ENCODE measurements at regions of chr5 and their contacts with region 1.

Region 1: DNA sequence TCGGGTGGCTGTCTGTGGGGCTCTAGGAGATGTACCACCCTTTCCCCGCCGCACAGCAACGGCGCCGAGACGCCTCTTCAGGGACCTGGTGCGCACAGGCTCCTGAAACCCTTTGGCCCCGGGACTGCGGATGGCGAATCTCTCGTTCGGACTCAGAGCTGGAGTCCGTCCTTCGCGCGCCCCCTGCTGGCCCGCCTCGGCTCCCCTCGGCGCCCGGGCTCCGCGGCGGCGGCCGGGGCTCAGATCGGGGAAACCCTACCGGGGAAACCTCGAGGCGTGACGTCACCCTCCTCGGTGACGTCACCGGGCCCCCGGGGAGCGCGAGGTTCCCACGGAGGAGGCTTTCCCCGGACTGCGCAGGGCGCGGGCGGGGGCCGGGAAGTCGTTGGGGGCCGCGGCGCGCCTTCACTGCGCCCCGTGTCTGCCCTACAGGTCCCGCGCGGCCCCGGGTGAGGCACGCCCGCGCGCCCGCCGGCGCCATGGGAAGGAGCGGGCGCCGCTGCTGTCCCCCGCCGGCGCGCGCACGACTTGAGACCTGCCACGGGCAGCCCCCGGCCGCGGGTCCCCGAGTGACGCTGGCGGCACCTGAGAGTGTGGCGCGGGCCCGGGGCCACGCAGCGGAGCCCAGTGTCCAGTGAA is 7.9 kb downstream of the PRR7 start:
- DNase-seq: peak; percentile 95
- H3K4me3 Mint-ChIP-seq: peak overlapping the region; percentile 78
- H3K27ac Mint-ChIP-seq: peak overlapping the region; percentile 66
- H3K4me1 Mint-ChIP-seq: peaks cover 11% of the 10 kb centered on the region
- H3K27me3 Mint-ChIP-seq: no peaks in the 10 kb centered on the region

Region 2: DNA sequence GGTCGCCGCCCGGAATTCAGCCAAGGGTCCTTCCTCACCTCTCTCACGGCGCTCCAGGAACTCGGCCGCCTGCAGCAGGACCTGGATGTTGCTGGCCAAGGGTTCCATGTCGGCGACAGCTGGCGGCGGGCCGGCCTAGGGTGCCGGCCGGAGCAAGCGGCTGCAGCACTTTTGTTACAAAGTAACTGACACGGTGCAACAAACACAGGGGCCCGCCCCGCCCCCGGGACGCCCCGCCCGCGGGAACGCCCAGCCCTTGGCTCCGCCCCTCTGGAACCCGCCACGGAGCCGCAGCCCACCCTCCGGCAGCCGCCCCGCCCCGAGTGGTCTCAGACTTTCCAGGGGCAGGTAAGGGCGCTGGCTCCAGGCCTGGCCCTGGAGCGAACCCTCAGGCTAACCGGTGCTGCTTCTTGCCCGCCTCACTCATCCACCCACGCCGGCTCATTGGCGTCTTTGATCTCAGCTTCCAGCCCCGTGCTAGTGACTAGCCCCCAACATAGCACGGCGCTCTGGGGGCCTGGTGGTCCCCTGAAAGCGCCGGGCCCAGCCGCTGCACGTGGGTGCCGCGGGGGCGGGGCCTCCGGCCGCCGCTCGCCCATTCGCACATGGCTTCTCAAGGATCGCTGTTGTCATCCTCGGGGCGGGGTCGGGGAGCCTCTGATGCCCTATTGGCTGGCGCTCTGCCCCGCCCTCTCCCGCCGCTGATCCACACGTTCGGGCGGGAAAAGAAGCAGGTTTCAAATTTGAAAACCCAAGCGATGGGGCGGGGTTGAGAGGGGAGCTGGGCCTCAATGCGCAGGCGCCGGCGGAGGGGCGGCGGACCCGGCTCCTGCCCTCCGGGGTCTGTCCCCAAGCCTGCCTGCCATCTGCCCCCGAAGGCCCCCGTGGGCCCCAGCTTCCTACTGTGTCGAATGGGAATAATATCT is 142.5 kb before region 1 on chr5 and contains the start of gene MXD3:
- CTCF ChIA-PET with region 1: interaction called, 26 read pairs
- POLR2A ChIA-PET with region 1: interaction called, 3 read pairs
- intact Hi-C with region 1: loop called (anchors 1 kb)
- DNase-seq: peak; percentile 98
- H3K4me3 Mint-ChIP-seq: peak within 1 kb of the TSS; percentile 78
- H3K27ac Mint-ChIP-seq: peak within 1 kb of the TSS; percentile 88
- H3K4me1 Mint-ChIP-seq: peaks cover 22% of the 10 kb centered on the region
- H3K27me3 Mint-ChIP-seq: peaks cover 1% of the 10 kb centered on the region
- total RNA-seq, gene MXD3: 31.2 to 33.4 TPM

Region 3: GRCh38 chr5:177351385-177352329 is 102.9 kb before region 1 on chr5 and contains the start of gene LMAN2:
- CTCF ChIA-PET with region 1: interaction called, 11 read pairs
- POLR2A ChIA-PET with region 1: no interaction called
- intact Hi-C with region 1: no loop called
- DNase-seq: peak; percentile 95
- H3K4me3 Mint-ChIP-seq: peak within 1 kb of the TSS; percentile 96
- H3K27ac Mint-ChIP-seq: peak within 1 kb of the TSS; percentile 99
- H3K4me1 Mint-ChIP-seq: peaks cover 64% of the 10 kb centered on the region
- H3K27me3 Mint-ChIP-seq: no peaks in the 10 kb centered on the region
- total RNA-seq, gene LMAN2: 98.3 to 104 TPM

Region 4: GRCh38 chr5:177412603-177413233 is 41.8 kb before region 1 on chr5:
- CTCF ChIA-PET with region 1: interaction called, 624 read pairs
- POLR2A ChIA-PET with region 1: no interaction called
- intact Hi-C with region 1: no loop called
- DNase-seq: peak; percentile 64
- H3K4me3 Mint-ChIP-seq: peak overlapping the region; percentile 55
- H3K27ac Mint-ChIP-seq: peak overlapping the region; percentile 82
- H3K4me1 Mint-ChIP-seq: peaks cover 46% of the 10 kb centered on the region
- H3K27me3 Mint-ChIP-seq: no peaks in the 10 kb centered on the region

Region 5: DNA sequence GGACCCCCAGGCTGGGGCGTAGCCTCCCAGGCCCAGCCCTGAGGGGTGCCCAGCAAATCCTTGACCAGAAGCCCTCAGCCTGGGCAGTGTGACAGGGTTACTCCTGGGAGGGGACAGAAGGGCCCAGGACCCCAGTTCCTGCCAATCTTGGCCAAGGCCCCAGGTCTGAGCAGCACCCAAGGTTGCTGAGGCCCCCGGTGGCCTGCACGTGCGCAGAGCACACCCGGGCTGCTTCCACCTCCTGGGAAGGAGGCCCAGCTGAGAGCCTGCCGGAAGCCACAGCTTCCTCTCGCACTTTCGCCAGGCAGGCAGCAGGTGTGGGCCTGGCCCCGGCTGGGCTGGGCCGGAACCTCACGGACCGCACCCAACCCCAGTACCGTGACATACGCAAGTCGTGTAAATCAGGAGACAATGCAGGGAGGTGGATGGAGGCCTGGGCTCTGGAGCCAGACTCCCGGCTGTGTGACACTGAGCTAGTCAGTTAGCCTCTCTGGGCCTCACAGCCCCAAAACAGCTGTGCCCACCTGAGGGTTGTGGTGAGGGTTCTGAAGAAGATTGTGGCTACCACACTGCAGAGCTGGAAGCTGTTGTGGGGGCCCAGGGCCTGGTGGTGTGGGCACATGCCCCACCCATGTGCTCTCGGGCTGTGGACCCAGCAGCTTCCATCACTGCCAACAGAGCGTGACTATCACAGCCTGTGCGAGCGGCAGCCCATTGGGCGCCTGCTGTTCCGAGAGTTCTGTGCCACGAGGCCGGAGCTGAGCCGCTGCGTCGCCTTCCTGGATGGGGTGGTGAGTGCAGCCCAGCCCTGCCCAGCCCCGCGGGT is 23.0 kb before region 1 on chr5:
- CTCF ChIA-PET with region 1: interaction called, 126 read pairs
- POLR2A ChIA-PET with region 1: interaction called, 319 read pairs
- intact Hi-C with region 1: loop called (anchors 1 kb)
- DNase-seq: peak; percentile 84
- H3K4me3 Mint-ChIP-seq: peak overlapping the region; percentile 97
- H3K27ac Mint-ChIP-seq: peak overlapping the region; percentile 97
- H3K4me1 Mint-ChIP-seq: peaks cover 61% of the 10 kb centered on the region
- H3K27me3 Mint-ChIP-seq: no peaks in the 10 kb centered on the region

Region 6: GRCh38 chr5:177473461-177474001 is 19.0 kb after region 1 on chr5 and contains the start of gene DBN1:
- CTCF ChIA-PET with region 1: interaction called, 13 read pairs
- POLR2A ChIA-PET with region 1: interaction called, 6 read pairs
- intact Hi-C with region 1: loop called (anchors 2 kb)
- DNase-seq: peak; percentile 25
- H3K4me3 Mint-ChIP-seq: peak within 1 kb of the TSS; percentile 64
- H3K27ac Mint-ChIP-seq: no peak within 1 kb of the TSS
- H3K4me1 Mint-ChIP-seq: peaks cover 22% of the 10 kb centered on the region
- H3K27me3 Mint-ChIP-seq: peaks cover 5% of the 10 kb centered on the region
- total RNA-seq, gene DBN1: 12.1 to 15.9 TPM

Region 7: GRCh38 chr5:177537389-177538361 is 83.2 kb after region 1 on chr5:
- CTCF ChIA-PET with region 1: no interaction called
- POLR2A ChIA-PET with region 1: no interaction called
- intact Hi-C with region 1: no loop called
- DNase-seq: no peak
- H3K4me3 Mint-ChIP-seq: no peak overlapping the region
- H3K27ac Mint-ChIP-seq: no peak overlapping the region
- H3K4me1 Mint-ChIP-seq: peaks cover 4% of the 10 kb centered on the region
- H3K27me3 Mint-ChIP-seq: no peaks in the 10 kb centered on the region

Measured in activated CD4-positive, alpha-beta memory T cell treated with anti-CD3 and anti-CD28 coated beads for 36 hours (primary cell).